ENCODE measurements at regions of chrX and their contacts with region 1.

Region 1: DNA sequence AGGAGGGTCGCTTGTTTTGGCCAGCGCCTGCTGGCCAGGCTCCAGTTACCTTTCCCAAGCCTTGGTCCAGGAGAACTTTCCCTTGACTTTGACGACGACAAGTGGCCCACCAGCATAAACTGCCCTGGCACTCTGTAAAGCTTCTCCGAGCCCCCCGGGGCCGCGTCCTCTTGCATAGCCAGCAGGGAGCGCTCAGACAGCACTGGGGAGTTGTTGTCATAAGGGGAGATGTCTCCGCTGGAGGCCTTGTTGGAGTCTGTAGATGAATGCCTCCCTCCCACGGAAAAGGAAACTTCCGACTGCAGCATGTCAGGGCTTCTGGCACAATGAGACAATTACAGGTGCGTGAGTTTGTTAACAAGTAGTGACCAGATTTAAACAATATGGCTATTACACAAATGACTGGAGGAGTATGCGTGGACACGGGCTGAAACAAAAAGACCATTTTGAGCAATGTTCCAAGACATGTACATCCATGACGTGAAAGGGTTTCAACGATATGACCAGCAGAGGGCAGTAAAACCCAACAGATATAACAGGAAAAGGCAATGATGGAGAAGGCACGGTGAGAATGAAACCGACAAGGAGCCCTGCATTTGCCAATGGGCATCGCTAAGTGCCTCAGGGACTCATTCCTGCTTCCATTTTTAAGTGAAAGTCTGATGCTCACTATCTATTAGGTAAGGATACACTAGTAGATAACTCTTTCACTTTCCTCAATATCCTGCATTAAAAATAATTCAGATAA is 33.0 kb downstream of the HCCS start:
- DNase-seq: peak; percentile 77
- H3K4me3 ChIP-seq: no peak overlapping the region
- H3K27ac ChIP-seq: peak overlapping the region in 2 of 4 donors; percentile 23 to 34
- H3K4me1 ChIP-seq: peaks cover 0 to 9% (median 0%) of the 10 kb centered on the region in 4 donors
- H3K27me3 ChIP-seq: no peaks in the 10 kb centered on the region
- CTCF ChIP-seq: peak; percentile 46 to 72 (median 50)
- EP300 ChIP-seq: no peak
- POLR2A ChIP-seq: no peak

Region 2: GRCh38 chrX:11111038-11111851 is 32.9 kb before region 1 on chrX and contains the start of gene HCCS:
- intact Hi-C with region 1: no loop called
- DNase-seq: peak; percentile 93
- H3K4me3 ChIP-seq: peak within 1 kb of the TSS; percentile 61 to 75 (median 66)
- H3K27ac ChIP-seq: peak within 1 kb of the TSS; percentile 81 to 92 (median 82)
- H3K4me1 ChIP-seq: peaks cover 0 to 30% (median 14%) of the 10 kb centered on the region in 4 donors
- H3K27me3 ChIP-seq: no peaks in the 10 kb centered on the region
- CTCF ChIP-seq: no peak
- EP300 ChIP-seq: no peak
- POLR2A ChIP-seq: peak; percentile 71 to 75
- total RNA-seq, gene HCCS: 13.3 to 20.7 (median 16.1) TPM

Region 3: DNA sequence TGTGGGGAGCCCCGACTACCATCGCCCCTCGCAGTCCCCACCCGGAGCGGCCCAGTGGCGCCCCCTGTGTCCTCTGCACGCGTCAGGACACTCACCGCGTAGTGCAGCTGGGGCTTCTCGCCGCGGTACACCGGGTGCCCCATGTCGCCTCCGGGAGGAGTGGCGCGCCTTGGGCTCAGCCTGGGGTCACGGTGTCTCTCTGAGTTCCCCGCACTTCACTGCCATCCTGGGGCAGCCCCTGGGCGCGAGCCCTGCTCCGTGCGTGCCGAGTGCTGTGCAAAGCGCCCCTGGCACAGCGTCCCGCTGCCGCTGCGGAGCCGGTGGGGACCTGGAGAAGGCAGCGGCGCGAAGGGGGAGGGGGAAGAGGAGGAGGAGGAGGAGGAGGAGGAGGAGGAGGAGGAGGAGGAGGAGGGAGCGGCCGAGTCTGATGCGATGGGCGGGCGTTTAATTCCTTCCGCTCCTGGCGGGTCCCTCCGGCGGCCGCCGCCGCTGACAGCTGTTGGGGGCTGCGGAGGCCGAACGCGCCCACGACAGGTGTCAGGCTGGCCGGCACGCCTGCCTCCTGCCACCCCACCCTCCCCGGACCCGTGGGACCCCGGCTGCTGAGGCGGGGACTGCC is 283.5 kb after region 1 on chrX:
- intact Hi-C with region 1: loop called (anchors 5 kb)
- DNase-seq: peak; percentile 82
- H3K4me3 ChIP-seq: peak overlapping the region; percentile 48 to 61 (median 56)
- H3K27ac ChIP-seq: peak overlapping the region; percentile 79 to 86 (median 82)
- H3K4me1 ChIP-seq: peaks cover 0 to 34% (median 14%) of the 10 kb centered on the region in 4 donors
- H3K27me3 ChIP-seq: no peaks in the 10 kb centered on the region
- CTCF ChIP-seq: peak in 3 of 4 experiments; percentile 18 to 45 (median 26)
- EP300 ChIP-seq: no peak
- POLR2A ChIP-seq: no peak

Region 4: DNA sequence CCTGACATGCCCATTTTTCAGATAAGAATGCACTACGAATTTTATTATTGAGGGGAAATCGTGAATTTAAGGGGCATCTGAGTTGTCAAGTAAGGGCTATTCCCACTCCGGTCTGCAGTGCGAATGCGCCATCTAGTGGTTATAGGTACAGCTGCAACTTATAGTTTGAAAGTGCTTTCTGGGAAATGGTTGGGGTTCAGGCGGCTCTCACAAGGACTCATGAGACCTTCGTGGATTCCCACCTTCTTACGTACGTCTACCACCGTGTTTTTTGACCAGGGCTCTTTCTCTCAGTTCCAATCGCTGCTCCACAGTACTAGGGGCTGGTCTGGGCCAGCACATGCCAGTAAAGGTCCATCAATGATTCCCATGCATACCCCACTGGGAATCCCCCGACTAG is 626.2 kb after region 1 on chrX:
- intact Hi-C with region 1: loop called (anchors 1 kb)
- DNase-seq: no peak
- H3K4me3 ChIP-seq: no peak overlapping the region
- H3K27ac ChIP-seq: no peak overlapping the region
- H3K4me1 ChIP-seq: no peaks in the 10 kb centered on the region
- H3K27me3 ChIP-seq: no peaks in the 10 kb centered on the region
- CTCF ChIP-seq: peak; percentile 37 to 70 (median 53)
- EP300 ChIP-seq: no peak
- POLR2A ChIP-seq: no peak